ENCODE measurements at regions of chr9 and their contacts with region 1.

Region 1: DNA sequence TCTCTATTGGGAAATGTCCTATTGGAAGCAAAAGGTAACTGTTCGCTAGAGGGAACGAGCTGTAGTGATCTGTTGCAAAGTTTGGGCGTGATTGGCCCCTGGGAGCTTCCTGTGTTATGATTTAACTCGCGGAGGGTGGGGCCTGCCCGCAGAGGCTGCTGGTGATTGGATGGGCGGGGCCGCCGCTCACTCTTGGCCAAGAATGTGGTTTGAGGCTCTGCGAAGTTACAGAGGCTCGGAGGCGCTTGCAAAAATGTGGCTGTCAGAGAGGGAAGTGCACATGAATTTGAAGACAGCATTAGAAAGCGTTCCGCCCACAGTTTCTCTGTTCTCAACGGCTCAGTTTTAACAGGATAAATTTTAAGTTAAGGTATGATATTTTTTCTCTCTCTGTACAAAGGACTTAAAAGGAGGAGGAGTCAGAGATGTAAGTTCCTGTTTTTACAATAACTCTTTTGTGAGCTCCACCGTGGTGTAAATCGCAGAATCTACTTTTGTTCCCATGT is 46.9 kb downstream of the CNTRL start:
- DNase-seq: peak; percentile 99
- ATAC-seq: peak; percentile 100
- H3K4me3 Mint-ChIP-seq: peak overlapping the region; percentile 80
- H3K27ac Mint-ChIP-seq: peak overlapping the region; percentile 88
- H3K4me1 Mint-ChIP-seq: peaks cover 45% of the 10 kb centered on the region
- H3K27me3 Mint-ChIP-seq: no peaks in the 10 kb centered on the region

Region 2: GRCh38 chr9:120692901-120693699 is 428.5 kb before region 1 on chr9:
- CTCF ChIA-PET with region 1: no interaction called
- POLR2A ChIA-PET with region 1: no interaction called
- DNase-seq: no peak
- ATAC-seq: peak; percentile 61
- H3K4me3 Mint-ChIP-seq: no peak overlapping the region
- H3K27ac Mint-ChIP-seq: no peak overlapping the region
- H3K4me1 Mint-ChIP-seq: peaks cover 26% of the 10 kb centered on the region
- H3K27me3 Mint-ChIP-seq: no peaks in the 10 kb centered on the region

Region 3: GRCh38 chr9:120755827-120756434 is 365.7 kb before region 1 on chr9:
- CTCF ChIA-PET with region 1: interaction called, 11 read pairs
- POLR2A ChIA-PET with region 1: no interaction called
- DNase-seq: peak; percentile 77
- ATAC-seq: peak; percentile 76
- H3K4me3 Mint-ChIP-seq: no peak overlapping the region
- H3K27ac Mint-ChIP-seq: no peak overlapping the region
- H3K4me1 Mint-ChIP-seq: peaks cover 15% of the 10 kb centered on the region
- H3K27me3 Mint-ChIP-seq: no peaks in the 10 kb centered on the region

Region 4: GRCh38 chr9:121074635-121075385 is 46.8 kb before region 1 on chr9 and contains the start of gene CNTRL:
- CTCF ChIA-PET with region 1: interaction called, 14 read pairs
- POLR2A ChIA-PET with region 1: no interaction called
- DNase-seq: peak; percentile 96
- ATAC-seq: peak; percentile 87
- H3K4me3 Mint-ChIP-seq: peak within 1 kb of the TSS; percentile 99
- H3K27ac Mint-ChIP-seq: peak within 1 kb of the TSS; percentile 98
- H3K4me1 Mint-ChIP-seq: peaks cover 53% of the 10 kb centered on the region
- H3K27me3 Mint-ChIP-seq: no peaks in the 10 kb centered on the region
- total RNA-seq, gene CNTRL: 80.8 to 84.3 TPM

Region 5: DNA sequence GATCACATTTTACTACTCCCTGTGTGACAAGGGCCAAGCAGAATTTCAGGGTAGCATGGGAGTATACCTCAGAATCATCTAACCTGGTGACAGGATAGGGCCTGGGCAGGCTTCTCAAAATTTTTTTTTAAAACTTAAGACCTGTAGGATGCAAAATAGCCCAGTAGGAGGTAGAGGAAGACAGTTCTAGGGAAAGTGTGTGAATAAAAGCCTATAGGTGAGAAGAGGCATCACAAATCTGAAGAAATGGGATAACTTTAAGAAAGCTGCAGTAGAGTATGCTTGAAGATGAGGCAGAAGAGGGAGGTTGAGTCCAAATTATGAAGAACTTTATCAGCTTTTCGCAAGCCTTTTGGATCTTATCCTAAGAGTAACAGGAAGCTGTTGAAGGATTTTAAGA is 14.6 kb before region 1 on chr9:
- CTCF ChIA-PET with region 1: interaction called, 12 read pairs
- POLR2A ChIA-PET with region 1: no interaction called
- DNase-seq: no peak
- ATAC-seq: peak; percentile 72
- H3K4me3 Mint-ChIP-seq: no peak overlapping the region
- H3K27ac Mint-ChIP-seq: no peak overlapping the region
- H3K4me1 Mint-ChIP-seq: peaks cover 23% of the 10 kb centered on the region
- H3K27me3 Mint-ChIP-seq: no peaks in the 10 kb centered on the region

Region 6: DNA sequence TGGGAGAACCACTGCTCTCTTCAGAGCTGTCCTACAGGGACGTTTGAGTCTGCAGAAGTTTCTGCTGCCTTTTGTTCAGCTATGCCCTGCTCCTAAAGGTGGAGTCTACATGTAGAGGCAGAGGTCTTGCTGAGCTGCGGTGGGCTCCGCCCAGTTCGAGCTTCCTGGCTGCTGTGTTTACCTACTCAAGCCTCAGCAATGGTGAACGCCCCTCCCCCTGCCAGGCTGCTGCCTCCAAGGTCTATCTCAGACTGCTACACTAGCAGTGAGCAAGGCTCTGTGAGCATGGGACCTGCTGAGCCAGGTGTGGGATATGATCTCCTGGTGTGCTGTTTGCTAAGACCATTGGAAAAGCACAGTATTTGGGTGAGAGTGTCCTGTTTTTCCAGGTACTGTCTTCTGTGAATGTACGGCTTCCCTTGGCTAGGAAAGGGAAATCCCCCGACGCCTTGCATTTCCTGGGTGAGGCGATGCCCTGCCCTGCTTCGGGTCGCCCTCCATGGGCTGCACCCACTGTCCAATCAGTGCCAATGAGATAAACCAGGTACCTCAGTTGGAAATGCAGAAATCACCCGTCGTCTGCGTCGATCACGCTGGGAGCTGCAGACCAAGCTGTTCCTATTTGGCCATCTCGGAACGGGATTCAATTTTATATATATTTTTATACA is 11.6 kb after region 1 on chr9:
- CTCF ChIA-PET with region 1: interaction called, 25 read pairs
- POLR2A ChIA-PET with region 1: interaction called, 26 read pairs
- DNase-seq: peak; percentile 90
- ATAC-seq: peak; percentile 99
- H3K4me3 Mint-ChIP-seq: peak overlapping the region; percentile 39
- H3K27ac Mint-ChIP-seq: peak overlapping the region; percentile 67
- H3K4me1 Mint-ChIP-seq: peaks cover 52% of the 10 kb centered on the region
- H3K27me3 Mint-ChIP-seq: no peaks in the 10 kb centered on the region

Region 7: GRCh38 chr9:121169094-121169601 is 47.5 kb after region 1 on chr9:
- CTCF ChIA-PET with region 1: interaction called, 10 read pairs
- POLR2A ChIA-PET with region 1: interaction called, 5 read pairs
- DNase-seq: peak; percentile 39
- ATAC-seq: peak; percentile 83
- H3K4me3 Mint-ChIP-seq: no peak overlapping the region
- H3K27ac Mint-ChIP-seq: peak overlapping the region; percentile 62
- H3K4me1 Mint-ChIP-seq: peaks cover 18% of the 10 kb centered on the region
- H3K27me3 Mint-ChIP-seq: no peaks in the 10 kb centered on the region

Region 8: DNA sequence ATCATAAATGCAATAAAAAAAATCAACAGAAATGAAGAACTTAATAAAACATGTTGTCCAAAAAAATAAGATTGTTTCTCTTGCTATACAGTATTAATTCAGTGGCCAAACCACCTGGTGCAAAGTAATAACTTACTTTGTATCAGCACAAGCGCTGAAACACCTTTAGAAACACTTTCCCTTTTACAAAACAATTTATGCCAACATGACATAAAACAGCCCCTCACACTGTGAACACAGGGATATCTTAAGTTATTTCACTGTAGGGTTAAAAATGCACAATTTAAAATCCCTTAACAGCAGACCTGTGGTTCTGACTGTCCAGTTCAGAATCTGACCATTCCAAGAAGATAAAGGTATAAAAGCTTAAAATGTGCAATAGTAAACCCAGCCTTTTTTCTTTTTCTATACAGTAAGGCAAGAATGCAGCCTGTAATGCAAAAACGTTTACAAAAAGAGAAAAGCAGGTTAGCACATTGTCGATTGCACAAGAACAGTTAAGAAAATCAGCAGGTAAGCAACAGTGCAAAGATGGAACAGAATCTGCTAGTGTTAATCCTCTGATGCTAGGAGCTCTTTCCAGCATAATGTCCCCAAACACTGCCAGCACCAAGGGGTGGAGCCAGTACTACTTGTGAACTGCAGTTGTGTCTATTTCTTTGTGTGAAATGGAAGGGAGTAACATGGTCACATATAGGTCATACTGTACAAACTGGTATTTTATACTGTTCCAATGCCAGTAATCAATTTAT is 58.5 kb after region 1 on chr9:
- CTCF ChIA-PET with region 1: no interaction called
- POLR2A ChIA-PET with region 1: no interaction called
- DNase-seq: no peak
- ATAC-seq: no peak
- H3K4me3 Mint-ChIP-seq: no peak overlapping the region
- H3K27ac Mint-ChIP-seq: no peak overlapping the region
- H3K4me1 Mint-ChIP-seq: peaks cover 8% of the 10 kb centered on the region
- H3K27me3 Mint-ChIP-seq: no peaks in the 10 kb centered on the region

Measured in activated CD8-positive, alpha-beta T cell treated with anti-CD3 and anti-CD28 coated beads, Interleukin-2, amount 10 ng/mL, durations not matched to agents 7 days and 5 days (primary cell).